ENCODE measurements at regions of chr15 and their contacts with region 1.

Region 1: GRCh38 chr15:72312605-72313447 is 7.1 kb downstream of the CELF6 start:
- DNase-seq: peak; percentile 67
- H3K4me3 ChIP-seq: no peak overlapping the region
- H3K27ac ChIP-seq: no peak overlapping the region
- H3K4me1 ChIP-seq: no peaks in the 10 kb centered on the region
- H3K27me3 ChIP-seq: peaks cover 0 to 2% of the 10 kb centered on the region in 2 experiments
- CTCF ChIP-seq: peak; percentile 79 to 83
- POLR2A ChIP-seq: no peak

Region 2: DNA sequence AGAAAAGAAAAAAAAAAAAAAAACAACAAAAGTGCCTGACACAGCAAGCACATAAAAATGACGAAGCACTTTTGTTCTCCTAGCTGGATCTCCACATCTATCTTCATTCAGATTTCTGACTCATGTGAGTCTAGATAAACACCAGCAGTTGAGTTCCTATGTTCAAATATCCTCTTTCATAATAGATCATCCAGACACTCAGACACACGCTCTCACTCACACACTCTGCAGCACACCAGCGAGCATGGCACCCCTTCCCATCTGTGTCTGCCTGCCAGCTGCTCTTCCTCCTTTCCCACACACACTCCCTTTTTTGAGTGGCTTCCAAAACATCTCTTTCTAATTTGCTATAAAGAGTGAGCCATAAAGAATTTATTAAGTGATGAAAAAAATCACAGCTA is 27.0 kb after region 1 on chr15:
- CTCF ChIA-PET with region 1: interaction called, 15 read pairs
- POLR2A ChIA-PET with region 1: no interaction called
- dilution Hi-C with region 1: no loop called
- intact Hi-C with region 1: loop called (anchors 1 kb)
- DNase-seq: peak; percentile 75
- H3K4me3 ChIP-seq: no peak overlapping the region
- H3K27ac ChIP-seq: peak overlapping the region; percentile 57
- H3K4me1 ChIP-seq: peaks cover 7% of the 10 kb centered on the region
- H3K27me3 ChIP-seq: no peaks in the 10 kb centered on the region
- CTCF ChIP-seq: no peak
- POLR2A ChIP-seq: no peak

Region 3: DNA sequence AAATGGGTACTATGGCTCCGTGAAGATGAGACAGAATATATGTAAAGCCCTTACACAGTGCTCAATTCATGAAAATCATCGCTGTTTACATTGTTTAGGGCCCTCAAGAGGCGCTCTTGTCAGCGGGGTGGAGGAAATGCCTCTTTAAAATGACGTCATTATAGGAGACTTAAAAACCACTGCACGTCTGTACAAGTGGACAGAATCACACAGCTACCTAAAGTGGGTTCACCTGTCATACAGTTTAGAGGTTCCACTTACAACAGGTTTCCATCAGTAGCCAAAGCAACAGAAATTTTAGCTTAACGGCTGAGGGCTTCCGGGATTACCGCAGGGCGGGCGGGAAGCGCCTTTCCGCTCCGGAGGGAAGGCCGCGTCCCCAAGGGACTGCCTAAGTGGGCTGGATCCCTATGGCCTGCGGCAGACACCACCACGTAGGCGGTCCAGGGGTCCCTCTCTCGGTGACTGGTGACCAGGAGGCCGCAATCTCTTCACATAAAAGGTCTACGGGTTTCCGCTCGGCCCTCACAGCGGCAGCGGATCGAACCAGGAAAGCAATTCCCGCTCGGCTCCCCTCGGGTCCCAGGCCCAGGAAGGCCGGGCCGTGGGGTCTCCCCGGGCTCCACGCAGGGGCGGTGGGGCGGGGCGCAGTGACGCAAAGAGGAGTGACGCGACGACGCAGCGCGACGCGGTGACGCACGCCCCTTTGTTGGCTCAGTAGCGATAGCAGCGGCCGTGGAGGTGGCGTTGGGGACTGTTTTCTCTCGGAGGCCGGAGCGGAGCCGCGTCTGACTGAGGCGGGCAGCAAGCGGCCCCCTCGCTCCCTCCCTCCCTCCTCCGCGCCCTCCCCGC is 161.0 kb after region 1 on chr15 and contains the start of gene ARIH1:
- CTCF ChIA-PET with region 1: interaction called, 6 read pairs
- POLR2A ChIA-PET with region 1: no interaction called
- dilution Hi-C with region 1: no loop called
- intact Hi-C with region 1: loop called (anchors 2 kb)
- DNase-seq: peak; percentile 96
- H3K4me3 ChIP-seq: peak within 1 kb of the TSS; percentile 94 to 99 (median 99)
- H3K27ac ChIP-seq: peak within 1 kb of the TSS; percentile 97
- H3K4me1 ChIP-seq: peaks cover 27% of the 10 kb centered on the region
- H3K27me3 ChIP-seq: no peaks in the 10 kb centered on the region
- CTCF ChIP-seq: peak; percentile 21 to 23
- POLR2A ChIP-seq: peak; percentile 90
- total RNA-seq, gene ARIH1: 137 and 144 TPM in 2 replicates

Region 4: DNA sequence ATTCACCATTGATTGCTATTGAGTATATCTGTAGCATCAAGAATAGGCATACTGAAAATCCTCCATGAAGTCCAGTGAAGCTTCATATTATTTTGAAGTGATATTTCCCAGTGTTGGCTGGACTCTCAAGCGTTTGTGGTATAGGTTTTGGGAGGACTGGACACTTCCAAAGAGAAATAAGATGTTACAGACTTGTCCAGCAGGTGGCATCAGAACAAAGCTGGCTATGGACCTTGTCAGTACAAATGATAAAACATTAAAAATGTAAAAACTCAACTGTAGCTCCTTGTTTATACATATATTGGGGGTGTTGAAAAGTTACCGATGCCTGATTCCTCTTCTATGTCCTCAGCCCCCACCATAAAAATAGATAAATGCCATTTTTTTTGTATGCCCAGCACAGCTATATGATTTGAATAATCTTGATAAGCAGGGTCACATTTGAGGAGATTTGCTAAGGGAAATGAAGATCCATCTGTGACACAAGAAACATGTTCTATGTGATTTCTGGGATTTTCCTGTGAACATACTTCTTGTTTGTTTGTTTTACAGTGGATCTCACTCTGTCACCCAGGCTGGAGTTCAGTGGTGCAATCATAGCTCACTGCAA is 287.1 kb after region 1 on chr15:
- CTCF ChIA-PET with region 1: interaction called, 20 read pairs
- POLR2A ChIA-PET with region 1: no interaction called
- dilution Hi-C with region 1: no loop called
- intact Hi-C with region 1: loop called (anchors 2 kb)
- DNase-seq: peak; percentile 56
- H3K4me3 ChIP-seq: no peak overlapping the region
- H3K27ac ChIP-seq: no peak overlapping the region
- H3K4me1 ChIP-seq: no peaks in the 10 kb centered on the region
- H3K27me3 ChIP-seq: no peaks in the 10 kb centered on the region
- CTCF ChIP-seq: peak; percentile 45 to 58
- POLR2A ChIP-seq: no peak

Region 5: DNA sequence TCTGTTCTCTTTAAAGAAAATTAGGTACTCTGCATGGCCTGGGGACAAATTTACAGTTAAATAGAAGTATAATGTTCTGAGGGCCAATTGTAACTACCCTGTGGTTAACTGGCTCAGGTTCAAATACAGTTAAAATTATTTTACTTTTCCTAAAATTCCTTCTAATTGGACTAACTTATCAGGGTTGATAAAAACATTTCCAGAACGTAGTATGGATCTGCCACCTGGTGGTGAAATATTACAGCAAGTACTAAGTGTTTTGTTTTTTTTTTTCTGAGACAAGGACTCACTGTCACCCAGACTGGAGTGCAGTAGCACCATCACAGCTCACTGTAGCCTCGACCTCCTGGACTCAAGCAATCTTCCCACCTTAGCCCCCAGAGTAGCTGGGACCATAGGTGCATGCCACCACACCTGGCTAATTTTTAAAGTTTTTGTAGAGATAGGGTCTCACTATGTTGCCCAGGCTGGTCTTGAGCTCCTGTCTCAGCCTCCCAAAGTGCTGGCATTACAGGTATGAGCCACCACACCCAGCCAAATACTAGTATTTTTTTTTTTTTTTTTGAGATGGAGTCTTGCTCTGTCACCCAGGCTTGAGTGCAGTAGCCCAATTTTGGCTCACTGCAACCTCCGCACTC is 768.6 kb after region 1 on chr15:
- CTCF ChIA-PET with region 1: interaction called, 13 read pairs
- POLR2A ChIA-PET with region 1: no interaction called
- dilution Hi-C with region 1: no loop called
- intact Hi-C with region 1: loop called (anchors 2 kb)
- DNase-seq: peak; percentile 65
- H3K4me3 ChIP-seq: no peak overlapping the region
- H3K27ac ChIP-seq: no peak overlapping the region
- H3K4me1 ChIP-seq: no peaks in the 10 kb centered on the region
- H3K27me3 ChIP-seq: peaks cover 49 to 77% of the 10 kb centered on the region in 2 experiments
- CTCF ChIP-seq: peak; percentile 21 to 44
- POLR2A ChIP-seq: no peak

Measured in endothelial cell of umbilical vein (primary cell).